ENCODE measurements at regions of chr15 and their contacts with region 1.

Region 1: DNA sequence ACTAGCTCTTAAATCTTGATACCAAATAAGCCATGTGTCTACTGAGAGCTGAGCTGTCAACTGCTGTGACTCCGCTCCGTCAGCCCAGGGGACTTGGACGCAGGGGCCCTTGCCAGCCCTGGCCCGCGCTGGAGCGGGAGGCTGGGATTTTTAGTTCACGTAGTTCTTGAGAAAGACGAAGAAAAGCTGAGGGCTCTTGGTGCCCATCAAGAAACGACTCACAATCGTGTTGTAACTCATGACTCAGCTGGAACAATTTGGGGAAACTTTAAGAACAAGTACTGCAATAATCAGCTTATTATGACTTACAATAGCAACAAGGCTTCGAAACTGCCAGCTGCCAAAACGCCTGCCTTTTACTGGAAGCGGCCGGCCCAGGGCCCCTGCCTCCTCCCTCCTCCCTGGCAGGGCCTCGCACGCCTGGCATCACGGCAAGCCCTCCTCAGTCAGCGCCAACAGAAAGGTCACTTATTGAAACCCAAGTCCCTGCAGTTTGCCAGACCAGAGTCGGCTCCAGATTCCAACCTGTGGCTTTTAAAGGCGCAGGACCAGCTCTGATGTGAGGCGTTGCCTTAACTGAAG is 60.3 kb downstream of the RGMA start:
- DNase-seq: peak; percentile 17
- CTCF ChIP-seq: no peak

Region 2: DNA sequence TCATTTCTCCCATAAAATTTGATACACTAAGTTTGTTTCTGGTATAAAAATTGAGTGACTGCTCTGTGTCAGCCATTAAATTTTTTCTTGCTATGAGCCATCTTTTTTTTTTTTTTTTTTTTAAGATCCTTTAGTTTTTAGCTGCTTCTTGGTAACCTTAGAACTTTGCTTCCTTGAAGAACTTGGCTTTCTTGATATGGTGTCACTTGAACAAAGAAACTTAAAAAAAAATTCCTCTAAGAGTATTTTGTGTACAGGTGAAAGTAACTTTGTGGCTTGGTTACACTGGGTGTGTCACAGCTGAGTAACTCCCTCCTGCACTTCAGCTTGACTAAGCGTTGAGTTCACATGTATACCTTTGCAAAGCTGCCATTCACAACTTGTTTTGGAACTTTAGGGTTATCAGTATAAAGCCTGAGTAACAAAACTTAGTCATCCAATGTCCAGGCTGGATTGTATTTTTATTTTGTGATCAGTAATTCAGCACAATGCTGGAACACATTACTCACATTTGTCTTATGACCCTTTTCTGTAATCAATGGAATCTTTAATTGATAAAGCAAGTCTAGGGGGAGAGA is 122.1 kb before region 1 on chr15:
- in situ Hi-C with region 1: no loop called
- DNase-seq: peak; percentile 38
- CTCF ChIP-seq: no peak

Region 3: DNA sequence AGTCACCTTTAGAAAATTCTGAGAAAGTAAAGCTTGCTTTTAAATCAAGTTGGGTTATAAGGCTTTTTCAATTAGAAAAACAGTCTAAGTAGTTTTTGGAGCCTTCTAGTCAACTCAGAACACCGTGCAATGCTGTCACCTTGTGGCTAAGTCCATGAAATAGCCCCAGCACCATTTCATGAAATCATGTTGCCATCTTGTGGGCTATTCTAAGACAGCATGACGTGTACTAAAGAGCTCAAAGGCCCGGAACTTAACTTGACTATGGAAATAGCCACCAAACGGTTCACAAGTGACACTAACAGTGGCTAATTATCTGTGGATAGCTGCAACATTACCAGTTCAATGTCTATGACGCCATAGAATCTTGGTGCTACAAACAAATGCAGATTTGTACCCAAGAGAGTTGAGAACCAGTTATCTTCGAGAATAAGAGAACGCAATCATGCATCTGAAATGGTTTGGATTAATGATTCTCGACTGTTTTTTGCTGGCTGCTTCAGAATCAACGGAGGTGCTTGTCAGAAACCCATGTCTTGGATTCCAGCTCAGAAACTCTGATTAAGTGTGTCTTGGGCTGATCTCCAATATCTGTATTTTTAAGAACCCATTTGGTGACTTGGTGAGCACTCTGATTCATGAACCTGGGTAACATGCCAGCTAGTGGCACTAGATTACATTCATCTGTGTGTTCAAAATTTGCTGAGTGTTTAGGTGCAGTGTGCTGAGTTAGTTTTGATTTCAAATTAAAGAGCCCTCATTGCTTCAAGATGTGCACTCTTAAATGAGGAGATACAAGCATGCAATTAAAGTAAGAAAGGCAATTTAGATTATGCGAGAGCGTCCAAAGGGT is 1091.4 kb after region 1 on chr15:
- in situ Hi-C with region 1: loop called (anchors 10 kb)
- DNase-seq: peak; percentile 60
- CTCF ChIP-seq: peak; percentile 83